Cardiac septum (tissue), 1 donor: ENCODE measurements at regions of chr3 and their contacts with region 1.

Region 1: GRCh38 chr3:177050501-177051237 is 146.6 kb downstream of the TBL1XR1 start:
- DNase-seq: no peak

Region 2: DNA sequence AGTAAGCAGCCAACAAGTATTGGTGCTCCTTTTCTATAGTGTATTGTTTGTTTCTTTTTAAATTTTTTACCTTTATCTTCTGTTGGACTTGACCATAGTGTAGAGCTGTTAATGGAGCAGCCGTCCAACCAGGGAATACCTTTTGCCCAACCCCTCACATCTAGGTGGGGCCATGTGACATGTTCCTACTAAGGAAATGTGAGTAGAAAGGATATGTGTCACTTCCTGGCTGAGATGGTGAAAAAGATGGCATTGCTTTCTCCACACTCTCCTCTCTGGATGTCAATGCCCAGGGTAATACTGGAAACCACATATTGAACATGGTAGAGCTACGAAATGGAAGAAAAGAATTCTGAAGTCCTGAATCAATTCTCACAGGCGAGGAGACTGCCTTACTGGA is 72.2 kb before region 1 on chr3:
- intact Hi-C with region 1: no loop called
- DNase-seq: no peak

Region 3: DNA sequence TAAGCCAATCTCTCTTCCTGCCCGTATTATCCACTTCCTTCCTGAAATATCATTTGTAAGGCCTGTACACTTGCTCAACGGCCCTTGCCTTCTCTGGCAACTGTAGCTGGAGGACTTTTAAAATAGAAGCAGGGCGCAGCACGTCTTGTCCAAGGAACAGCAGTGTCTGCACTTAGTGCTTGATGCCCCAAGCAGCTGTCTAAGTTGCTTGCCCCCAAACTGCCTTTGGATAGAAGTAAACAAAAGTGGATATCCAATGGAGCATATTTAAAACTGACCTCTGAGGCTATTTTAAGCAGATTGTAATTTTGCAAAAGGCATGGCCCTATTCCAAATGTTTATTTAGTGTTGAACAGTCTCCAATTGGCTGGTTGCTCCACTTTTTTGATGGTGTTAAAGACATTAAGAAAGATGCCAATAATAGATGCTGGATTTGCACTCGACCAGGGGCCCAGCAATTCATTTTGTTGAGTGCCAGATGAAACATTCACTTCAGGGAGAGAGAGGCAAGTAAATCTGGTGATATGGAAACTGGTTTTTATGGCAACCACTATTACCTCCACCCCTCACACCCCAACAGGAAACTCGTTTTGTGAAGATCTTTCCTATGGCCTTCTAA is 673.5 kb after region 1 on chr3:
- intact Hi-C with region 1: loop called (anchors 10 kb)
- DNase-seq: no peak

Region 4: DNA sequence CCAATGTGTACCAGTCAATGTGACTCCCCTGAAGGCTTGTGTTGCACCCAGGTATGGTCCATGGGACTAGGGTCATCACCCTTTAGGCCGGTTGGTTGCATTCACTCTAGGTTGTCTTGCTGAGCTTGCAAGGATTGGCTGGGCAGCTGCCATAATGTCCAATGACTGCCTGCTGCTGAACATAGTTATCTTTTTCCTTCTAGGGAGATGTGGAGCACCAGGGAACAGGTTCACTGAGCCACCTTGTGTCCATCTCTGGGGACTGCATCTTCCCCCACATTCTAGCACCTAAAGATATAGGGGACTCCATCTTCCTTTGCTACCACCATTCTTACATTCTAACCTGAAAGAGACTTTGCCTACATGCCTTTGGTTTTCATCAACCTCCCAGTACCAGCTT is 727.0 kb after region 1 on chr3:
- intact Hi-C with region 1: loop called (anchors 5 kb)
- DNase-seq: no peak